ENCODE measurements at regions of chr6 and their contacts with region 1.

Region 1: GRCh38 chr6:168060521-168060931 is 18.5 kb downstream of the FRMD1 start:
- DNase-seq: no peak
- H3K4me3 ChIP-seq: no peak overlapping the region
- H3K27ac ChIP-seq: no peak overlapping the region
- H3K4me1 ChIP-seq: no peaks in the 10 kb centered on the region
- H3K27me3 ChIP-seq: no peaks in the 10 kb centered on the region
- CTCF ChIP-seq: peak in 2 of 3 experiments; percentile 82 to 92; a peak in 3 of 4 replicates
- EP300 ChIP-seq: no peak
- POLR2A ChIP-seq: no peak
- RAD21 ChIP-seq: peak; percentile 90 to 93

Region 2: DNA sequence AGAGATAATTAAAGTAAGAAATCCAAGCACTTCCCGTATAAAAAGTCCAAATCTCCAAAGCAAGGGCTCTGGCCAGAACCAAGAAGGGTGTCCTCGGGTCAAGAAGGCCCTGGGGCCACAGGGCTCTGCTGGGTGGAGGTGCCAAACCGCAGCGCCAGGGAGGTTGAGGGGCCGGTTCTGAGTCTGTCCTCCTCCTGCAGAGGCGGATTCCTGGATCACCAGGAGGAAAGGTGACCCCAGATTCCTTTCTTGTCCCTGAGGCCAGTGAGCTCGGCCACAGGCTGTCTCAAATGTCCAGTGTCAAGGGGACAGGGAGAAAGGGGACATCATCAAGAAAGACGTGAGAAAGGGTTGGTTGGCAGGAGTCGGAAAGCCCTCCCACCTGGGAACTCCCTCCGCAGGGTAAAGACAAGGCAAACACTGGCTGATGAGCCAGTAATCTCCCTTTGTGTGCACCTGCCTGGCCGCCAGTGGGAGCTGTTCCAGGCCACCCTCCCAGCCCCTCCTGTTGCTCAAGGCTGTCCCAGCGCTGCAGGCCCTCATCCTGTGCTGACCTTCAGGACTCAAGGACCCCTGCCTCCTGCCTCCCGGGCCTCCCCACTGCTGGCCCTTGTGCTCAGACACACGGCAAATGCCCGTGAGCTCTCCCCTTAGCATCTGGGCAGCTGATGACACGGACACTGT is 11.0 kb after region 1 on chr6:
- CTCF ChIA-PET with region 1: interaction called, 38 read pairs
- POLR2A ChIA-PET with region 1: no interaction called
- DNase-seq: peak in 1 of 2 experiments; percentile 74
- H3K4me3 ChIP-seq: no peak overlapping the region
- H3K27ac ChIP-seq: no peak overlapping the region
- H3K4me1 ChIP-seq: peaks cover 0 to 6% (median 1%) of the 10 kb centered on the region in 4 experiments; a peak in 2 of 7 replicates
- H3K27me3 ChIP-seq: no peaks in the 10 kb centered on the region
- CTCF ChIP-seq: peak; percentile 82 to 92 (median 89)
- EP300 ChIP-seq: no peak
- POLR2A ChIP-seq: no peak
- RAD21 ChIP-seq: peak; percentile 51 to 68

Region 3: GRCh38 chr6:168132531-168133167 is 72.1 kb after region 1 on chr6:
- CTCF ChIA-PET with region 1: interaction called, 73 read pairs
- POLR2A ChIA-PET with region 1: interaction called, 5 read pairs
- DNase-seq: peak; percentile 39 to 81
- H3K4me3 ChIP-seq: peak overlapping the region in 1 of 4 experiments; percentile 25; a peak in 2 of 8 replicates
- H3K27ac ChIP-seq: no peak overlapping the region
- H3K4me1 ChIP-seq: peaks cover 7 to 18% (median 12%) of the 10 kb centered on the region in 4 experiments
- H3K27me3 ChIP-seq: peaks cover 0 to 12% (median 10%) of the 10 kb centered on the region in 4 experiments; a peak in 5 of 7 replicates
- CTCF ChIP-seq: peak in 2 of 3 experiments; percentile 71 to 81; a peak in 3 of 4 replicates
- EP300 ChIP-seq: no peak
- POLR2A ChIP-seq: no peak
- RAD21 ChIP-seq: peak; percentile 80 to 87

Region 4: DNA sequence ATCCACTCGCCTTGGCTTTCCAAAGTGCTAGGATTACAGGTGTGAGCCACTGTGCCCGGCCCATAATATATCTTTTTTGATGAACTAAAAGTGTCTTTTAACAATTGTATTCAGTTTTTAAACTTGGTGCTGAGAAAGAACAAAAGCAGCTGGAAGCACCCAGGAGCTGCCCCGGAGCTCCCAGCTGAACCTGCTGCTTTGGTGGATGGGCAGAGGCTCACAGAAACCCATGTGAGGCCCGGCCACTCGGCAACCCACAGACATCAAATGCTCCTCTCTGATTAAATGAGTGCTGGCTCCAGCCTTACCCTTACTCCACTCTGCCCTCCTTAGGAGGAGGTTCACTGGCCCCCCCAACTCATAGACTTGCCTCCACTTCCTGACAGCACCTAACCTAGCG is 77.9 kb after region 1 on chr6:
- CTCF ChIA-PET with region 1: interaction called, 73 read pairs
- POLR2A ChIA-PET with region 1: interaction called, 3 read pairs
- DNase-seq: no peak
- H3K4me3 ChIP-seq: no peak overlapping the region
- H3K27ac ChIP-seq: no peak overlapping the region
- H3K4me1 ChIP-seq: no peaks in the 10 kb centered on the region
- H3K27me3 ChIP-seq: peaks cover 0 to 4% (median 0%) of the 10 kb centered on the region in 4 experiments; a peak in 2 of 7 replicates
- CTCF ChIP-seq: no peak
- EP300 ChIP-seq: no peak
- POLR2A ChIP-seq: no peak
- RAD21 ChIP-seq: no peak

Measured in H1 (cell line).